HCT116 (cell line): ENCODE measurements at regions of chr7 and their contacts with region 1.

Region 1: DNA sequence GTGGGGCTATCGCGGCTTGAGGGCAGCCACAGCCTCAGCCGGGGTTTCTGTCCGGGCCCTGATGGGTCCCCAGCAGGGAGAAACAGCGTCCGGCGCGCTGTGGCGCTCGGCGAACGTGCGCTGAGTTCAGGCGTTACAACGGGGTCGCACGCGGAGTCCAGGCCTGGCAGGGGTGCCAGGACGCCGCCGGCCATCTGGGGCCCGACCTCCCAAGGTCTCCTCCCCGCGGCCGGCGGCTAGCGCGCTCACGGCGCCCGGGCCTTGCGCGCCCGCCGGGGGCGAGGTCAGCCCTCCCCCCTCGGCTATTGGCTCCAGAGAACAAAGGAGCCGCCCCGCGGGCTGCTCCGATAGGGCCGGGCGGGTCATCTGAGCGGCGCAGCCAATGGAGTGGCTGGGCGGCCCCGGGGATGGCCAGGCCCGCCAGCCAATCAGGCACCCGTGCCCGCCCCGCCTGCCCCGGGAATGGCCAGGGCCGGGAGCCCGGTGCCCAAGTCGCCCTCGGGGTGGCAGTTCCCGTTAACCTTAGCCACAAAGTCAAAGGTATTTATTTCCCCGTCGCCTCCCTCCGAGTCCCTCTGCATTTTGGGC is at the start of gene ZNF775:
- DNase-seq: peak; percentile 85
- ATAC-seq: peak; percentile 96
- H3K4me3 ChIP-seq: peak within 1 kb of the TSS; percentile 66 to 88
- H3K27ac ChIP-seq: peak within 1 kb of the TSS; percentile 78
- H3K4me1 ChIP-seq: peaks cover 15 to 24% of the 10 kb centered on the region in 2 experiments
- H3K27me3 ChIP-seq: no peaks in the 10 kb centered on the region
- CTCF ChIP-seq: no peak
- POLR2A ChIP-seq: peak; percentile 60
- RAD21 ChIP-seq: no peak
- total RNA-seq, gene ZNF775: 4.5 TPM

Region 2: GRCh38 chr7:150393325-150393724 is 14.4 kb after region 1 on chr7:
- CTCF ChIA-PET with region 1: no interaction called
- POLR2A ChIA-PET with region 1: no interaction called
- RAD21 ChIA-PET with region 1: no interaction called
- intact Hi-C with region 1: loop called (anchors 2 kb)
- DNase-seq: no peak
- ATAC-seq: no peak
- H3K4me3 ChIP-seq: no peak overlapping the region
- H3K27ac ChIP-seq: no peak overlapping the region
- H3K4me1 ChIP-seq: no peaks in the 10 kb centered on the region
- H3K27me3 ChIP-seq: no peaks in the 10 kb centered on the region
- CTCF ChIP-seq: no peak
- POLR2A ChIP-seq: no peak
- RAD21 ChIP-seq: no peak

Region 3: GRCh38 chr7:150404805-150405583 is 26.0 kb after region 1 on chr7:
- CTCF ChIA-PET with region 1: no interaction called
- POLR2A ChIA-PET with region 1: no interaction called
- RAD21 ChIA-PET with region 1: interaction called in 1 of 2 experiments, 3 read pairs
- intact Hi-C with region 1: loop called (anchors 1 kb)
- DNase-seq: peak; percentile 60
- ATAC-seq: peak; percentile 88
- H3K4me3 ChIP-seq: peak overlapping the region; percentile 48 to 64
- H3K27ac ChIP-seq: peak overlapping the region; percentile 56
- H3K4me1 ChIP-seq: peaks cover 19 to 40% of the 10 kb centered on the region in 2 experiments
- H3K27me3 ChIP-seq: no peaks in the 10 kb centered on the region
- CTCF ChIP-seq: peak in 2 of 3 experiments; percentile 24 to 49; a peak in 3 of 6 replicates
- POLR2A ChIP-seq: peak; percentile 46
- RAD21 ChIP-seq: no peak

Region 4: GRCh38 chr7:150621376-150621775 is 242.4 kb after region 1 on chr7:
- CTCF ChIA-PET with region 1: no interaction called
- POLR2A ChIA-PET with region 1: no interaction called
- RAD21 ChIA-PET with region 1: no interaction called
- intact Hi-C with region 1: no loop called
- DNase-seq: no peak
- ATAC-seq: no peak
- H3K4me3 ChIP-seq: no peak overlapping the region
- H3K27ac ChIP-seq: no peak overlapping the region
- H3K4me1 ChIP-seq: no peaks in the 10 kb centered on the region
- H3K27me3 ChIP-seq: peaks cover 44% of the 10 kb centered on the region
- CTCF ChIP-seq: no peak
- POLR2A ChIP-seq: no peak
- RAD21 ChIP-seq: no peak